ENCODE measurements at regions of chr10 and their contacts with region 1.

Region 1: GRCh38 chr10:126749015-126749655 is 78.6 kb upstream of the C10orf90 start:
- DNase-seq: peak; percentile 80
- H3K4me3 Mint-ChIP-seq: no peak overlapping the region
- H3K27ac Mint-ChIP-seq: no peak overlapping the region
- H3K4me1 Mint-ChIP-seq: no peaks in the 10 kb centered on the region
- H3K27me3 Mint-ChIP-seq: peaks cover 40% of the 10 kb centered on the region
- CTCF ChIP-seq: peak; percentile 88

Region 2: GRCh38 chr10:126160971-126161659 is 588.0 kb before region 1 on chr10:
- CTCF ChIA-PET with region 1: no interaction called
- POLR2A ChIA-PET with region 1: no interaction called
- intact Hi-C with region 1: loop called (anchors 1 kb)
- DNase-seq: peak; percentile 54
- H3K4me3 Mint-ChIP-seq: no peak overlapping the region
- H3K27ac Mint-ChIP-seq: no peak overlapping the region
- H3K4me1 Mint-ChIP-seq: no peaks in the 10 kb centered on the region
- H3K27me3 Mint-ChIP-seq: peaks cover 28% of the 10 kb centered on the region
- CTCF ChIP-seq: peak; percentile 48

Region 3: DNA sequence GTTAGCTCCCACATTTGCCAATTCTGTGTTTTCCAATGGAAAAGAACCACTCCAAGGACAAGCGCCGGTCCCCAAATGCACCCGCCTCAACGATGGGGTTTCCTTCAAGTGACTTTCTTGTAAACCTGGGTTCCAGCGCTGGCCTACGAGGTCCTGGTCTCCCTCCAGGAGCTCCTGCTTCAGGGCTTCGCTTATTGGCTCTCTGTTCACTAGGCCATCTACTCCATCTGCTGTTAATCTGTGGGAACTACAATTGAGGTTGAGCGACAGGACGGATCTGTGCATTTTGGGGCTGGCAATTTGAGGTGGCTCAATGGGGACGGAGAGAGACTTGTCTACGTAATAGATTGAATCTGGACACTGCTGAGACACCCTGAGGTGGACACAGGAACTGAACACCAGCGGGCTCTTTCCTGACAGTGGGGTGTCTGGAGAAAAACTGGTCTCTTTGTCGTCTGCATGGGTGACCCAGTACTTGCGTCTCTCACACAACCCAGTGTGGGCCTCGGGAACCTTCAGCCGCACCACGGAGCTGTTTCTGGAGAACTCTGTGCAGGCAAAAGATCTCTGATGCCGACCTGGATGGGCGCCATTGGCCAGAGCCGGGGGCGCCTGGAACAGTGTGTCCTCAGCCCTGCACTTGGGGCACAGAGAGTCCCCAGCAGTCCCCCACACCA is 244.9 kb before region 1 on chr10:
- CTCF ChIA-PET with region 1: interaction called, 3 read pairs
- POLR2A ChIA-PET with region 1: no interaction called
- intact Hi-C with region 1: loop called (anchors 1 kb)
- DNase-seq: peak; percentile 82
- H3K4me3 Mint-ChIP-seq: no peak overlapping the region
- H3K27ac Mint-ChIP-seq: no peak overlapping the region
- H3K4me1 Mint-ChIP-seq: no peaks in the 10 kb centered on the region
- H3K27me3 Mint-ChIP-seq: no peaks in the 10 kb centered on the region
- CTCF ChIP-seq: peak; percentile 75

Region 4: GRCh38 chr10:126570621-126571602 is 178.2 kb before region 1 on chr10:
- CTCF ChIA-PET with region 1: no interaction called
- POLR2A ChIA-PET with region 1: no interaction called
- intact Hi-C with region 1: loop called (anchors 1 kb)
- DNase-seq: peak; percentile 21
- H3K4me3 Mint-ChIP-seq: no peak overlapping the region
- H3K27ac Mint-ChIP-seq: peak overlapping the region; percentile 39
- H3K4me1 Mint-ChIP-seq: peaks cover 21% of the 10 kb centered on the region
- H3K27me3 Mint-ChIP-seq: no peaks in the 10 kb centered on the region
- CTCF ChIP-seq: no peak